Gastrocnemius medialis (tissue), 4 donors: ENCODE measurements at regions of chr1 and their contacts with region 1.

Region 1: GRCh38 chr1:169466259-169467230 is 19.2 kb downstream of the SLC19A2 start:
- DNase-seq: no peak
- ATAC-seq: no peak
- H3K4me3 ChIP-seq: no peak overlapping the region
- H3K27ac ChIP-seq: no peak overlapping the region
- H3K4me1 ChIP-seq: peaks cover 0 to 4% of the 10 kb centered on the region in 2 donors
- H3K27me3 ChIP-seq: no peaks in the 10 kb centered on the region
- CTCF ChIP-seq: peak in 3 of 5 experiments; percentile 15 to 31 (median 25)
- POLR2A ChIP-seq: no peak

Region 2: DNA sequence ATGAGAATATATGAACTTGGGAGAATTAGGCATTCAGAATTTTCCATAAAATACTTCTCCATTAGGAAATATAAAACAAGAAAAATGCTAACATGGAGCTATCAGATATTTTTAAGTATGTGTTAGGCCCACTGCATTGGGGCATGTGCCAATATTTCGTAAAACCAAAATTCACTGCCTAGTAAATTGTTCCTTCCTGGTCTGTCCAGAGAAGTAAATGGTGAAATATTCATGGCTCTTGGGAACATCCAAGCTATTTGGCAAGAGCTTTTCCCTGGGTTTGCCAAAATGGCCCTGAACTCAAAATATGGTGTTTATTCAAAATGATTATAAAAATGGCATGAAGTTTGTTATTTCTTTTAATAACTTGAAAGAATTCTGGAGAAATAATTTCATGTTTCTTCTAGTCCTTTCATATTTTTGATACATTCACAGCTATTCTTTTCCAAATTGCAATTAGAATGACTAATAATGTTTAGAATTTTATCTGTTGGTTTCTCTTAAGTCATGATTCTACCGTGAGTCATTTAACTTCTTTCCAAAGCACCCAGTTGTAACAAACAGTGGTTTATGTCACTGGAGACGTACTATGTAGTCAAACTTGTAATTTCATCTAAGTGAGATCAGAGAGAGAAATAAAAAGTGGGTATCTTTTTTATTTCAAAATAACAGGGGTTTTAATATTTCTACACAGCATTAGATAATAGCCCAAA is 44.9 kb after region 1 on chr1:
- in situ Hi-C with region 1: no loop called
- intact Hi-C with region 1: loop called (anchors 5 kb)
- DNase-seq: peak; percentile 8 to 31
- ATAC-seq: peak; percentile 69 to 74
- H3K4me3 ChIP-seq: no peak overlapping the region
- H3K27ac ChIP-seq: peak overlapping the region in 3 of 4 donors; percentile 51 to 54 (median 52)
- H3K4me1 ChIP-seq: peaks cover 11 to 28% of the 10 kb centered on the region in 2 donors
- H3K27me3 ChIP-seq: no peaks in the 10 kb centered on the region
- CTCF ChIP-seq: no peak
- POLR2A ChIP-seq: no peak